ENCODE measurements at regions of chr2 and their contacts with region 1.

Region 1: DNA sequence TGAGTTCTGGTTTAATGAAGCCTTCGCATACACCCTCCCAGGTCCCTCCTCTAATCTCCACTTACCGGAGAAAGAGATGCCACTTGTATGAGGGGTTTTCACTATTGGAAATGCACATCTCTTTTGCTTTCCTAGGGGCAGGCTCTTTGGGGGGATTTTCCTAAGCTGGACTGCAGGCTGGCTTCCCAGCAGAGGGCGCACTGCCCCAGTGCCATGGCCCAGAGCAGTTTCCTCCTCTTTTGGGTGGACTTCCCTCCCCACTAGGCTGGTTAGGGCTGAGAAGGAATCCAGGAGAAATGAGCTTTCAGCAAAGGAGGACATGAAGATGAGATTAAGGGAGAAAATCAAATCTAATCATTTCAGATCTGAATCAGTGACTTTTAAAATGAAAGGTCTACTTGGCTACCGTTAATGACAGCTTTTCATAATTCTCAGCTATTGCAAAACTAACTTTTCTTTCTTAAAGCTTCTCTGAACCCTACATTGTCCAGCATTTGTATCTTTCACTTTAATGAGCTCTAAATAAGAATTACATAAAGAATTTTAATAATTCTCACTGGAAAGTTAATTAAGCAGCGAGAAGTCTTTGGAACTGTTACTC is 784.1 kb upstream of the FANCL start:
- DNase-seq: peak; percentile 71
- ATAC-seq: peak; percentile 66
- H3K4me3 ChIP-seq: no peak overlapping the region
- H3K4me3 Mint-ChIP-seq: peak overlapping the region; percentile 28
- H3K27ac ChIP-seq: no peak overlapping the region
- H3K27ac Mint-ChIP-seq: no peak overlapping the region
- H3K4me1 ChIP-seq: peaks cover 0 to 3% of the 10 kb centered on the region in 2 donors
- H3K4me1 Mint-ChIP-seq: peaks cover 2% of the 10 kb centered on the region
- H3K27me3 ChIP-seq: peaks cover 0 to 2% (median 0%) of the 10 kb centered on the region in 4 experiments
- H3K27me3 Mint-ChIP-seq: peaks cover 17% of the 10 kb centered on the region
- CTCF ChIP-seq: peak; percentile 86

Region 2: DNA sequence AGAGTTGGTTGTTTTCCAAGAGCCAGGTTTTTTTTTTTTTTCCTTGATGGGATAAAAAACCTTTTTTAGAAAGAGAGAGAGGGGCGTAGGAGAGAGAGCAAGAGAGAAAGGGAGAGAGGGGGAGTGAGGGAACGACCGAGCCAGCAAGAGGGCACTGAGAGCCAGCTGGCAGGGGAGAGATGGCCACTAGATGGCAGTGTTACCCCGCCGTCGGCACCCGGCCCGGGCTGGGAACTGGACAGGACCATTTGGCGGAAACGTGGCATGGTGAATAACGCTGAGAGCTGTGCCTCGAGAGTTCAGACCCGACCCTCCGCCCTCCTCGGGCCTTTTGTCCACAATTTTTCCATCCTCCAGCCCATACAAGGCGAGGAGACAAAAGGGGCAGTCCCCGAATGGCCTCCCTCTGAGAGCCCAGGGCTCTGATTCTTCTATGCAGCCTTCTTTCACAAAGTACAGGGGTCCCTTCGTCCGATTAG is 1265.4 kb before region 1 on chr2:
- CTCF ChIA-PET with region 1: interaction called, 10 read pairs
- POLR2A ChIA-PET with region 1: no interaction called
- intact Hi-C with region 1: loop called (anchors 10 kb)
- DNase-seq: peak; percentile 77
- ATAC-seq: peak; percentile 87
- H3K4me3 ChIP-seq: peak overlapping the region in 3 of 5 experiments; percentile 40 to 55 (median 50)
- H3K4me3 Mint-ChIP-seq: peak overlapping the region; percentile 72
- H3K27ac ChIP-seq: no peak overlapping the region
- H3K27ac Mint-ChIP-seq: no peak overlapping the region
- H3K4me1 ChIP-seq: peaks cover 15 to 20% of the 10 kb centered on the region in 2 donors
- H3K4me1 Mint-ChIP-seq: peaks cover 19% of the 10 kb centered on the region
- H3K27me3 ChIP-seq: no peaks in the 10 kb centered on the region
- H3K27me3 Mint-ChIP-seq: no peaks in the 10 kb centered on the region
- CTCF ChIP-seq: peak; percentile 99

Region 3: DNA sequence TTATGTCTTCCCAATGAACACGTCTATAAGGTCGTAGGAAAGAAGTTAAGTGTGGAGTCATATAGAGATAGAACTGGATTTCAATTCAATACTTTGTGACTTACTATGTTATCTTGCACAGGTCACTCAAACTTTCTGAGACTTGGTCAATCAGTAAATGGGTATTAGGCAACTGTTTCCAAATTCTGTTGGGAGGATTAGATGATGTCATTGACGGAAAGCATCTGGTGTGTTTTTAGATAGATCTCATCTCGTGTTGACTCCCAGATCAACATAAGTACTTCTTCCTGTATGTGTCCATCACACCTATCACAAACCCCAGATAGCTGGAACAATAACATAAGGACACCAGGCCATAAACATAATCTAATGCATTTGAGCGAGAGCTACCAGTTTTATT is 13.0 kb before region 1 on chr2:
- CTCF ChIA-PET with region 1: interaction called, 24 read pairs
- POLR2A ChIA-PET with region 1: no interaction called
- intact Hi-C with region 1: no loop called
- DNase-seq: no peak
- ATAC-seq: no peak
- H3K4me3 ChIP-seq: no peak overlapping the region
- H3K4me3 Mint-ChIP-seq: no peak overlapping the region
- H3K27ac ChIP-seq: no peak overlapping the region
- H3K27ac Mint-ChIP-seq: no peak overlapping the region
- H3K4me1 ChIP-seq: no peaks in the 10 kb centered on the region
- H3K4me1 Mint-ChIP-seq: no peaks in the 10 kb centered on the region
- H3K27me3 ChIP-seq: peaks cover 0 to 4% (median 0%) of the 10 kb centered on the region in 4 experiments
- H3K27me3 Mint-ChIP-seq: peaks cover 23% of the 10 kb centered on the region
- CTCF ChIP-seq: no peak

Region 4: DNA sequence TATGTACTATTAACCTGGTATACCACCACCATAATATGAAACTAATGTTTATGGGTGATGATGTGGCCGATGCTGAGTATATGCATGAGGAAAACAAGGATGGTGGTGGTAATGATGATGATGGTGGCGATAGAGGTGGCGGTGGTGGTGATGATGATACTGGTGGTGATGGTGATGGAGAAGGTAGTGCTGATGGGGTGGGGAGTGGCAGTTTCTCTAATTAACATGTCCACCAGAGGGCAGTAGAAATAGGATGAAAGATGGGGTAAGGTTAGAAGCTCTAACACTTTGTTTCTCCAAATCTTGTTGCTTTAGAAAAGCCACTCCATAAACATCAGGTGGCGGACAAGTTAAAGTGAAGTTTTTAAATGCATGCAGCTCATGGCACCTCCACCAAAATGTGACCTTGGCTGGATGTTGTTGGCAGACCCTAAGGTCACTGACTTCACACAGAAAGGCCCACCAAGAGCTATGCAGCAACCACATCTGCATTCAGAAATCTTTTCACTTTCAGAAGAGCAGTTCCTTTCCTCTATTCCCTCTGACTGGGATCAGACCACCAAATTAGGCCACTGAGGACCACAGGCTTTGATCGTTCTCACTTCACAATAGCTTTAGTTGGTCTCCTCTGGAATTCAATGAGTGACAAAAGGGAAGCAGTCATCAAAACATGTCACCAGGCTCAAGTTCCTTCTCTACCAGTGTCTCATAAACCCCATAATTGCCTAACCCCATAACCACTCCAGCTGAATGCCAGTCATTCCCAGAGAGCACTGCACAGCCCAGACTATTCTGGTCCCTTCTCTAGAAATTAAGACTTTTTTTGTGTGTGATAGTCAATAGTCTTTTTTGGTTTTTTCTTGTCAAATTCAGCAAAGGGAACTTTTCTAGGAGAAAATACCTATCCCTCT is 1535.7 kb after region 1 on chr2:
- CTCF ChIA-PET with region 1: interaction called, 142 read pairs
- POLR2A ChIA-PET with region 1: no interaction called
- intact Hi-C with region 1: loop called (anchors 1 kb)
- DNase-seq: peak; percentile 75
- ATAC-seq: peak; percentile 53
- H3K4me3 ChIP-seq: no peak overlapping the region
- H3K4me3 Mint-ChIP-seq: no peak overlapping the region
- H3K27ac ChIP-seq: no peak overlapping the region
- H3K27ac Mint-ChIP-seq: peak overlapping the region; percentile 70
- H3K4me1 ChIP-seq: peaks cover 18% of the 10 kb centered on the region in 2 donors
- H3K4me1 Mint-ChIP-seq: peaks cover 37% of the 10 kb centered on the region
- H3K27me3 ChIP-seq: no peaks in the 10 kb centered on the region
- H3K27me3 Mint-ChIP-seq: no peaks in the 10 kb centered on the region
- CTCF ChIP-seq: peak; percentile 63

Region 5: DNA sequence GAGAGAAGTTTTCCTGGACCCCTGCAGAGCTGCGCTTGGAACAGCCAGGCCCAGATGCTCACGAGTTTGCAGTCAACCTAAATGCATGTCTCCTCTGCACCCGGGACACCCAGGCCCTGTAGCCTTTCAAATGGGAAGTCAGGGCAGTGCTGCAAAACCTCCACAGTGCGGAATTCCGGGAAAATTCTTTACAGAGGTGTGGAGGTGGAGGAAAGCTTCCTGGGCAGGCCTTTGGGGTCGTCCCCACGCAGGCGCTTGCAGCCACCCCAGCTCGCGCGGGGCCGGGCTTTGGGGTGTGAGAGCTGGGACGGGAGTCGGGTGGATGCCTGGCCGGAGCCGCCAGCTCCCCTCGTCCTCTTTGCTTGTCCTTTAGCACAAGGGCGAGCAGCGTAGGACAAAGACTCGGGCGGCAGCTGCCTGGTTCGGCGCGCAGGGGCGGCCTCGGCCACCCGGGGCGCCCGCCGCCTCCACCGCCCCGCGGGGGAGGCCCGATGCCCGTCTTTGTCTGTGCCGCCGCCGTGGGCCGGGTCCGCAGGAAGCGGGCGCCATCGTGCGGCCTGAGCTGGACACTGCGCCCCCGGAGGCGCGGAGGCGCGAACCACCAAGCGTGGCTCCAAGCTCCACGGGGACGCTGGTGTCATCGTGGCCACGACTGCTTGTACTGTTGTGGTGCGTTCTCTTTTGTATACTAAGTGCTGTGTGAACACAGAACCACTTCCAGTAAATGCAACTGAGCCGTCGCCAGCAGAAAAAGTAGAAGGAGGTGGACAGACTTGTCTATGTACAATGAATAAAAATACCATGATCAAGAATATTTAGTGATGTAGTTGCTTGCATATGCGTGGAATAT is 1556.4 kb after region 1 on chr2:
- CTCF ChIA-PET with region 1: interaction called, 133 read pairs
- POLR2A ChIA-PET with region 1: interaction called, 5 read pairs
- intact Hi-C with region 1: loop called (anchors 1 kb)
- DNase-seq: peak; percentile 89
- ATAC-seq: peak; percentile 100
- H3K4me3 ChIP-seq: peak overlapping the region in 4 of 5 experiments; percentile 38 to 61 (median 51)
- H3K4me3 Mint-ChIP-seq: peak overlapping the region; percentile 72
- H3K27ac ChIP-seq: no peak overlapping the region
- H3K27ac Mint-ChIP-seq: no peak overlapping the region
- H3K4me1 ChIP-seq: peaks cover 7 to 10% of the 10 kb centered on the region in 2 donors
- H3K4me1 Mint-ChIP-seq: peaks cover 7% of the 10 kb centered on the region
- H3K27me3 ChIP-seq: peaks cover 0 to 14% (median 0%) of the 10 kb centered on the region in 4 experiments
- H3K27me3 Mint-ChIP-seq: peaks cover 24% of the 10 kb centered on the region
- CTCF ChIP-seq: peak; percentile 98